ENCODE measurements at regions of chr12 and their contacts with region 1.

Region 1: DNA sequence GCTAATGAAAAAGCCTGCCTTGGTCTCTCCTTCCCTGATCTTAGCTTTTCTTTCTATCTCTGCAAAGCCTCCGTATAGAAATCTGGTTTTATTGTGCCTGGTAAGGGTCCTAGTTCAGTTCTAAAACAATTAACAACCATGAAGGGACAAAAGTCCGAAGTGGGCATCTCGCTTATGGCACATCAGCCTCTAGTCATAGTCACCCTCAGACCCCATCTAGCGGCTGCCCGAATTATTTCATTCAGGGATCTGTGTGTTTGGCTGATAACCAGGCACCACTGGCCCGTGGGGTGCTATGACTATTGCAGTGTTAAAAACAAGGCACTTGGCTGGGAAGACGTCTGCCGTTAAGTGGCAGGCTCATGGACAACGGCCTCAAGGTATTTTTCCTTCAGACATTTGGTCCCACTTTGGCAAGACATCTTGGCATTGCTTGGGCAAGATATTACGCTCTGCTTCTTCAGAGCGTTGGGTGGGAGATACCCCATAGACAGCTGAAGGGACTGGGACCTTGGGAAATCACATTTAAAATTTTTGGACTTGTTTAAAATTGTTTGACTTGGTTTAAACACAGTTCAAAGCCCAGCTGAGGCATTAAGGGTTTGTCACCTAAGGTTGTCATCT is 87.1 kb downstream of the SINHCAF start:
- DNase-seq: peak; percentile 53 to 87 (median 62)
- ATAC-seq: peak; percentile 73 to 77
- H3K4me3 ChIP-seq: no peak overlapping the region
- H3K27ac ChIP-seq: no peak overlapping the region
- H3K4me1 ChIP-seq: no peaks in the 10 kb centered on the region
- H3K27me3 ChIP-seq: no peaks in the 10 kb centered on the region

Region 2: GRCh38 chr12:31117203-31118011 is 121.5 kb before region 1 on chr12:
- intact Hi-C with region 1: loop called in 1 of 4 experiments (anchors 10 kb)
- DNase-seq: peak; percentile 50 to 70 (median 70)
- ATAC-seq: peak; percentile 77 to 78
- H3K4me3 ChIP-seq: peak overlapping the region; percentile 35
- H3K27ac ChIP-seq: no peak overlapping the region
- H3K4me1 ChIP-seq: no peaks in the 10 kb centered on the region
- H3K27me3 ChIP-seq: no peaks in the 10 kb centered on the region

Region 3: GRCh38 chr12:31306621-31307265 is 67.9 kb after region 1 on chr12:
- intact Hi-C with region 1: no loop called
- DNase-seq: no peak
- ATAC-seq: no peak
- H3K4me3 ChIP-seq: no peak overlapping the region
- H3K27ac ChIP-seq: no peak overlapping the region
- H3K4me1 ChIP-seq: no peaks in the 10 kb centered on the region
- H3K27me3 ChIP-seq: no peaks in the 10 kb centered on the region